ENCODE measurements at regions of chr14 and their contacts with region 1.

Region 1: DNA sequence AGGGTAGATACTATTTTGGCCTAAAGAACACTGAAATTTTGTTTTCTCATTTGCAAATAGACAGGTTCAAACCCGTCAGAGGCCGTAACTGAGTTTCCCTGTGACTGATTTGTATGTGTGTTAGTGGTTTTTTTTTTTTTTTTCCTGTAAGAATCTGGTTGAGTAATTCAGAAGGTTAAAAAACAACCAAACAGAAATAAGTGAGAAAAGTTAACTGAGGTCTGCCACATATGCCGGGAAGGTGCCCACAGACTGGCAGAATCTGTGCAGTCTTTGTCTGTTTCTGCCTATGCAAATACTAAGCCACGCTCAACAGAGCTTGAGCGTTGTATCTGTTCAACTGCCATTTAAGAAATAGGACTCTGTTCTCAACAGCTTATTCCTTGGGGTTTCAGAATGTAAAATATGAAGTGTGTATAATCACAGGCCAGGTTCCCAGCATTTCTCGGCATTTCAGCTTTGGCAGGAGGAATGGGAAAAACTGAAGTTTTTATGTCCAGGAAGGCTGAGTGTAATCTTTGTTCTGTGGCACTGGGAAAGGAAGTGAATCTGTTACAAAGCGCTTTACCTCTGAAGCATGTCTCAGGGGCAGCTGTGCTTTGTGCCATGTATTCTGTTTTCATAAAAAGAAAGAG is 181.9 kb downstream of the PRKCH start:
- DNase-seq: peak in 34 of 35 experiments; percentile 36 to 83 (median 59)
- ATAC-seq: peak; percentile 81 to 89 (median 86)
- H3K4me3 ChIP-seq: no peak overlapping the region
- H3K4me3 Mint-ChIP-seq: peak overlapping the region; percentile 69 to 78 (median 72)
- H3K27ac ChIP-seq: peak overlapping the region; percentile 79
- H3K27ac Mint-ChIP-seq: peak overlapping the region in 1 of 2 donors; percentile 99
- H3K4me1 ChIP-seq: peaks cover 63 to 71% of the 10 kb centered on the region in 2 experiments
- H3K4me1 Mint-ChIP-seq: peaks cover 96 to 99% (median 99%) of the 10 kb centered on the region in 3 donors
- H3K27me3 ChIP-seq: no peaks in the 10 kb centered on the region
- H3K27me3 Mint-ChIP-seq: no peaks in the 10 kb centered on the region

Region 2: DNA sequence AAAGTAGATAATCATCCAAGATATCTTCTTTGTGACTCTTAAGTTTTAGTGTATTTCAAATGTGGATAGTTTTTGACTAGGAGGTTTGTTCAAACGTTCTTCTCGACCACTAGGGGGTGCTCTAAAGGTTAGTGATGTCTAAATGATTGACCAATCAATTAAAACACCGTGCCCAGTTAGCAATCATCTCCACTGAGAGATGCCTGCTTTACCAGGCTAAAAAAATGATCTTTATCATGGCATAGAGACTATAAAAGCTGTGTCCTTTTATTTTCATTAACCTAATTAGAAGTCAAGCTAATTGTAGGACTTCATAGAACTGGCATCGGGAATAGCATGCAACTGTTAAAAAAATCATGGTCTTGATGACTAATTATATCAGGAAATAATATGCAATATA is 28.0 kb before region 1 on chr14:
- CTCF ChIA-PET with region 1: interaction called, 7 to 28 read pairs
- POLR2A ChIA-PET with region 1: interaction called, 6 to 11 read pairs
- DNase-seq: peak in 1 of 35 experiments; percentile 78
- ATAC-seq: no peak
- H3K4me3 ChIP-seq: no peak overlapping the region
- H3K4me3 Mint-ChIP-seq: peak overlapping the region in 1 of 3 donors; percentile 89
- H3K27ac ChIP-seq: peak overlapping the region; percentile 99
- H3K27ac Mint-ChIP-seq: peak overlapping the region; percentile 96
- H3K4me1 ChIP-seq: peaks cover 85 to 87% of the 10 kb centered on the region in 2 experiments
- H3K4me1 Mint-ChIP-seq: peaks cover 93 to 97% (median 95%) of the 10 kb centered on the region in 3 donors
- H3K27me3 ChIP-seq: no peaks in the 10 kb centered on the region
- H3K27me3 Mint-ChIP-seq: no peaks in the 10 kb centered on the region

Region 3: GRCh38 chr14:61488417-61489401 is 14.6 kb before region 1 on chr14:
- CTCF ChIA-PET with region 1: interaction called in 1 of 2 experiments, 11 read pairs
- POLR2A ChIA-PET with region 1: interaction called in 1 of 2 experiments, 8 read pairs
- DNase-seq: no peak
- ATAC-seq: no peak
- H3K4me3 ChIP-seq: no peak overlapping the region
- H3K4me3 Mint-ChIP-seq: no peak overlapping the region
- H3K27ac ChIP-seq: no peak overlapping the region
- H3K27ac Mint-ChIP-seq: peak overlapping the region; percentile 67 to 82
- H3K4me1 ChIP-seq: peaks cover 2 to 28% of the 10 kb centered on the region in 2 experiments
- H3K4me1 Mint-ChIP-seq: peaks cover 33 to 48% (median 38%) of the 10 kb centered on the region in 3 donors
- H3K27me3 ChIP-seq: no peaks in the 10 kb centered on the region
- H3K27me3 Mint-ChIP-seq: no peaks in the 10 kb centered on the region

Region 4: DNA sequence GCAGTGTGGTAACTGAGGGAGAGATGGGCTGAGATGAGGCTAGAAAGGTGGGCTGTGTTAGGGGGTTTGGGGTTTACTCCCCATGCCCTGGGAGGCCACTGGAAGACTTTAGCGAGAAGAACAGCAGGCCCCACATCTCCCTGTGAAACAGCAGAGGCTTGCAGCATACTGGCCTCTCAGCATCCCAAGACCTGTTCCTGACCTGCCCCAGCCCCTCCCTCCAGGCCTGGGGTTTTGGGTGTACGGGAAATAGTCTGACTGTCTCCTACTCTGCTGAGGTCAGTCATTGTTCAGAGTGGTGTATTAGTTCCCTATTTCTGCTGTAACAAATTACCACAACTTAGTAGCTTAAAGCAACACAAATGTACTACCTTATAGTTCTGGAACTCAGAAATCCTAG is 88.6 kb after region 1 on chr14:
- CTCF ChIA-PET with region 1: no interaction called
- POLR2A ChIA-PET with region 1: no interaction called
- DNase-seq: peak in 1 of 35 experiments; percentile 18
- ATAC-seq: no peak
- H3K4me3 ChIP-seq: no peak overlapping the region
- H3K4me3 Mint-ChIP-seq: no peak overlapping the region
- H3K27ac ChIP-seq: no peak overlapping the region
- H3K27ac Mint-ChIP-seq: no peak overlapping the region
- H3K4me1 ChIP-seq: peaks cover 0 to 18% of the 10 kb centered on the region in 2 experiments
- H3K4me1 Mint-ChIP-seq: peaks cover 31 to 35% (median 32%) of the 10 kb centered on the region in 3 donors
- H3K27me3 ChIP-seq: no peaks in the 10 kb centered on the region
- H3K27me3 Mint-ChIP-seq: no peaks in the 10 kb centered on the region

Region 5: GRCh38 chr14:61710853-61711817 is 207.9 kb after region 1 on chr14:
- CTCF ChIA-PET with region 1: no interaction called
- POLR2A ChIA-PET with region 1: no interaction called
- DNase-seq: no peak
- ATAC-seq: peak in 1 of 4 experiments; percentile 41
- H3K4me3 ChIP-seq: no peak overlapping the region
- H3K4me3 Mint-ChIP-seq: peak overlapping the region; percentile 4 to 60 (median 55)
- H3K27ac ChIP-seq: no peak overlapping the region
- H3K27ac Mint-ChIP-seq: peak overlapping the region; percentile 19 to 28
- H3K4me1 ChIP-seq: peaks cover 23 to 51% of the 10 kb centered on the region in 2 experiments
- H3K4me1 Mint-ChIP-seq: peaks cover 87 to 91% (median 90%) of the 10 kb centered on the region in 3 donors
- H3K27me3 ChIP-seq: no peaks in the 10 kb centered on the region
- H3K27me3 Mint-ChIP-seq: no peaks in the 10 kb centered on the region

Region 6: GRCh38 chr14:61837336-61838229 is 334.3 kb after region 1 on chr14:
- CTCF ChIA-PET with region 1: no interaction called
- POLR2A ChIA-PET with region 1: interaction called in 1 of 2 experiments, 16 read pairs
- DNase-seq: peak; percentile 29 to 89 (median 63)
- ATAC-seq: peak; percentile 80 to 95 (median 92)
- H3K4me3 ChIP-seq: no peak overlapping the region
- H3K4me3 Mint-ChIP-seq: no peak overlapping the region
- H3K27ac ChIP-seq: no peak overlapping the region
- H3K27ac Mint-ChIP-seq: no peak overlapping the region
- H3K4me1 ChIP-seq: no peaks in the 10 kb centered on the region
- H3K4me1 Mint-ChIP-seq: peaks cover 0 to 5% (median 0%) of the 10 kb centered on the region in 3 donors
- H3K27me3 ChIP-seq: peaks cover 0 to 4% of the 10 kb centered on the region in 2 experiments
- H3K27me3 Mint-ChIP-seq: peaks cover 0 to 4% of the 10 kb centered on the region in 2 donors

Region 7: GRCh38 chr14:61992139-61992538 is 488.9 kb after region 1 on chr14:
- CTCF ChIA-PET with region 1: no interaction called
- POLR2A ChIA-PET with region 1: no interaction called
- DNase-seq: no peak
- ATAC-seq: no peak
- H3K4me3 ChIP-seq: no peak overlapping the region
- H3K4me3 Mint-ChIP-seq: no peak overlapping the region
- H3K27ac ChIP-seq: no peak overlapping the region
- H3K27ac Mint-ChIP-seq: no peak overlapping the region
- H3K4me1 ChIP-seq: no peaks in the 10 kb centered on the region
- H3K4me1 Mint-ChIP-seq: no peaks in the 10 kb centered on the region
- H3K27me3 ChIP-seq: peaks cover 0 to 3% of the 10 kb centered on the region in 2 experiments
- H3K27me3 Mint-ChIP-seq: peaks cover 0 to 16% of the 10 kb centered on the region in 2 donors

Measured in T-cell (primary cell).